ENCODE measurements at regions of chr7 and their contacts with region 1.

Region 1: GRCh38 chr7:139192014-139192706 is 38.9 kb upstream of the UBN2 start:
- DNase-seq: no peak
- ATAC-seq: no peak
- H3K4me3 ChIP-seq: no peak overlapping the region
- H3K27ac ChIP-seq: no peak overlapping the region
- H3K4me1 ChIP-seq: peaks cover 7% of the 10 kb centered on the region
- H3K27me3 ChIP-seq: no peaks in the 10 kb centered on the region
- CTCF ChIP-seq: no peak
- POLR2A ChIP-seq: no peak

Region 2: DNA sequence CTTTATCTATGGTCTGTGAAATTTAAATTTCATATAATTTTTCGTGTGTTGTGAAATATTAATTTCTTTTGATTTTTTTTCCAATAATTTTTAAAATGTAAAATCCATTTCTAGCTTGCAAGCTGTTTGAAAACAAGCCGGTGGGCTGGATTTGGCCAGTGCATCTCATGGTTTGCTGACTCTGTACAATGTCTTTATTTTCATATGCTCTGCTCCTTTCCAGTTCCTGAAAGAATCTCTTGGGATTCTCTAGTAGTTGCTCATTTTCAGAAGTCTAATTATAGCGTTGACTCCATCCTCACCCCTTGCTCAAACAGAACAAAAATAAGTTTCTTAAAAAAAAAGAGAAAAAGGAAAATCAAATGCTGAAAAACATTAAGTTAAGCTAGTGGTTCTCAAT is 60.3 kb after region 1 on chr7:
- intact Hi-C with region 1: loop called (anchors 10 kb)
- DNase-seq: no peak
- ATAC-seq: no peak
- H3K4me3 ChIP-seq: no peak overlapping the region
- H3K27ac ChIP-seq: no peak overlapping the region
- H3K4me1 ChIP-seq: peaks cover 8% of the 10 kb centered on the region
- H3K27me3 ChIP-seq: no peaks in the 10 kb centered on the region
- CTCF ChIP-seq: no peak
- POLR2A ChIP-seq: no peak

Region 3: DNA sequence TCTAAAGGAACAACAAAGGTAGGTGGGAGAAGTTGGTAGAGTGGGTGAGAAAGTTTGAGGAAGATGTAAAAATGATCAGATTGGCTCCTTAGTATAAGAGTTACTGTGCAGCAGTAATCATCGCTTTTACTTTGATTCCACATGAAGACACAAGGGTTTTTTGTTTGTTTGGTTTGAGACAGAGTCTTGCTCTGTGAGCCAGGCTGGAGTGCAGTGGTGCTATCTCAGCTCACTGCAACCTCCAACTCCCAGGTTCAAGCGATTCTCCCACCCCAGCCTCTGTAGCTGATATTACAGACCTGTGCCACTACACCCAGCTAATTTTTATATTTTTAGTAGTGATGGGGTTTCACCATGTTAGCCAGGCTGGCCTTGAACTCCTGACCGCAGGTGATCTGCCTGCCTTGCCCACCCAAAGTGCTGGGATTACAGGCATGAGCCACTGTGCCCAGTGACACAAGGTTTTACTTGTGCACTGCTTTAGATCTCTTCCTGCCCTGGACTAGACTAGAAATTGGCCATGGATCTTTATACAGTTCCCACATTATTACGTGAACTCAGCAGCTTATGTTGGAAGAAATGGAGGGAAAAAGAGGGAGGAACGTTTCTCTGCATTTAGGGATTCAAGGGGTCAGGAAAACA is 178.3 kb after region 1 on chr7:
- intact Hi-C with region 1: no loop called
- DNase-seq: no peak
- ATAC-seq: no peak
- H3K4me3 ChIP-seq: no peak overlapping the region
- H3K27ac ChIP-seq: no peak overlapping the region
- H3K4me1 ChIP-seq: peaks cover 47% of the 10 kb centered on the region
- H3K27me3 ChIP-seq: no peaks in the 10 kb centered on the region
- CTCF ChIP-seq: no peak
- POLR2A ChIP-seq: no peak